A549 (cell line): ENCODE measurements at regions of chr17 and their contacts with region 1.

Region 1: DNA sequence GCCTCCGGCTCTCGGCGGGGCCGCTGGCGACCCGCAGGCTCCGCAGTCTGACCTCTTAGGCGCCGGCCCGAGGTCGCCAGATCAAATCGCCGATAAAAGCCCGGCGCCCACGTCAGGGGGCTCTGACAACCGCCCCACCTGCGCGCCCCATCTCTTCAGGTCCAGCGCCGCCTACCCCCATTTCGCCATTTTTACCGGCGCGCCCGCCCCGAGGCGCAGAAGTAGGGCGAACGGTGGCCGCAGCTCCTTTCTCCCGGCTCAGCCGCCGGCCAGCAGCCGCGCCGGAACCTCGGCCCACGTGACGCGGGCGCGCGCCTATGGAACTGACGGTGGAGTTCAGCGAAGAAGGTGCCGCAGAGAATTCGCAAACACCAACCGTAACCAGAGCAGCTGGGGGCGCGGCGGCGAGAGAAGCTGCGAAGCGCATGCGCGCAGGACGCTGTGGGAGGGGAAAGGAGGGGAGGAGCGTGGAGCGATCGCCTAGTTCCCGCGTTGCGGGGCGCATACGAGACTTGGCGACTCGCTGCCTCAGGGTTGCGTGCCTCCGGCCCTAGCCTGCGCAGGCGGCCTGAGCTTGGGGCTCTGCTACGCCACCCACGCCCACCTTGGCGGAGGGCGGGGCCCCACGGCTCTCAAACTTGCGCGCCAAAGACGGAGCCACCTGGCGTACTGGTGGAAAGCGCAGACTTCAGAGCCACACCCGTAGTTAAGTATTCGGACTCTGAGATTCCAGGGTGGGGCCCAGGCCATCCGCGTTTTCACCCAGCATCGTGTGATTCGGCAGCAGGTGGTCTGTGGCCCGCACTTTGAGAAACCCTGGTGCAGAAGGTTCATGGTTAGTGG is at the start of gene TRIM37:
- DNase-seq: peak; percentile 96 to 100
- ATAC-seq: peak; percentile 92 to 97
- H3K4me3 ChIP-seq: peak within 1 kb of the TSS; percentile 71
- H3K27ac ChIP-seq: peak within 1 kb of the TSS; percentile 85 to 90
- H3K4me1 ChIP-seq: peaks cover 19% of the 10 kb centered on the region; the same call in 2 of the 3 replicates
- CTCF ChIP-seq: no peak
- EP300 ChIP-seq: no peak
- POLR2A ChIP-seq: peak; percentile 68
- RAD21 ChIP-seq: peak in 1 of 2 experiments; percentile 6; a peak in 1 of 5 replicates
- polyA plus RNA-seq, gene TRIM37: 51.3 and 56.3 TPM in 2 replicates

Region 2: DNA sequence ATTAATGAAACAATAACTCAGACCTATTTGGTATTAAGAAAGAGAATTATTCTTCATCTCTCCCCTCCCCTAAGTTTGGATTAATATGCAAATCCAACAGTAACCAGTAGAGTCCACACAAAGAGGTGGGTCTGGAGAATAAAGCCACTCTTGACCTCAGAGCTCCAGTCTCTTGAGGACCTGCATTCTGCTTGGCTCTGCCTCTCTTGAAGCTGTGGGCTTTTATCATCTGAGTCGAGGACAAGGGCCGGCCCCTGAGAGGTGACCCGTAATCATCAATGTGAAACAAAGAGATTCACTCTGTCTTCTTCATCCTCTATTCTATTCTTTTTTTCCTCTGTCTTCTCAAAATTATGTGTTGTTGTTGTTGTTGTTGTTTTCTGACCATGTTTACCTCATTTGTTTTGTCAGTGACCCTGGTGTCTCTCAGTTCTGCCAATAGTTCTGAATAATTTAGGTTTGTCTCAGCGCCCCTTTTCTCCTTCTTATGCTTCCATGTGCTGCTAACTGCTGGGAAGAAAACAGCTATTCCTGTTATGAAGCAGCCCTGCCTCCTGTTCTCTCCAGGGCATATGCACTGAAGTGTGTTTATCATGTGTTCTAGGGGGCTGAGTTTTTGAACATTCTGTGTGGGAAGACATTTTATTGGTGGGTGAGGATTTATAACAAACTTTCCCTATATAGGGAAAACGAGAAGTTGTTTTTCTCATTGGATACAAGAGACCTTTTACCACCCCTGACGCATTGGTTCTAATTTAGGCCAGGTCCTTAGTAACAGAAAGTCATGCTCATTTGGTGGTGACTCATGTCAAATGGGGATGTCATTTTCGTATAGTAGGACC is 135.9 kb before region 1 on chr17:
- CTCF ChIA-PET with region 1: no interaction called
- POLR2A ChIA-PET with region 1: no interaction called
- DNase-seq: no peak
- ATAC-seq: no peak
- H3K4me3 ChIP-seq: no peak overlapping the region
- H3K27ac ChIP-seq: no peak overlapping the region
- H3K4me1 ChIP-seq: no peaks in the 10 kb centered on the region
- CTCF ChIP-seq: no peak
- EP300 ChIP-seq: no peak
- POLR2A ChIP-seq: no peak
- RAD21 ChIP-seq: no peak

Region 3: GRCh38 chr17:59093702-59094231 is 12.9 kb before region 1 on chr17:
- CTCF ChIA-PET with region 1: interaction called, 8 read pairs
- POLR2A ChIA-PET with region 1: interaction called, 20 read pairs
- DNase-seq: peak; percentile 34 to 90
- ATAC-seq: peak; percentile 87 to 91
- H3K4me3 ChIP-seq: peak overlapping the region; percentile 9; the same call in 1 of the 3 replicates
- H3K27ac ChIP-seq: peak overlapping the region; percentile 30 to 75; a peak in 5 of 6 replicates
- H3K4me1 ChIP-seq: peaks cover 31% of the 10 kb centered on the region
- CTCF ChIP-seq: no peak
- EP300 ChIP-seq: peak; percentile 25 to 65; a peak in 3 of 5 replicates
- POLR2A ChIP-seq: no peak
- RAD21 ChIP-seq: no peak

Region 4: DNA sequence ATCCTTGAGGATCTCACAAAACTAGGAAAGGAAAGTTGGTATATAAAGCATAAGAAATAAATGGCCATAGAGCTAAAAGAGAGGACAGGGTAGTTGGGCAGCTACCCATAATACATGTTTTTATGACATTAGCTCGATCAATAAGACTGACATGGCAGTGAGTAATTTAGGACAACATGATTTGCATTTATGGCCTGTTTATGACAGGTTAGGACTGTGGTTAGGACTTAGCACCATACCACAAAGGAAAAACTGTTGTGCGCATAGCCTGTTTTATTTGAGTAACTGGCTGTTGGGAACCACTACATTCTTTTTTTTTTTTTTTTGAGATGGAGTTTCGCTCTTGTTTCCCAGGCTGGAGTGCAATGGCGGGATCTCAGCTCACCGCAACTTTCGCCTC is 18.0 kb after region 1 on chr17:
- CTCF ChIA-PET with region 1: interaction called, 13 read pairs
- POLR2A ChIA-PET with region 1: no interaction called
- DNase-seq: no peak
- ATAC-seq: no peak
- H3K4me3 ChIP-seq: no peak overlapping the region
- H3K27ac ChIP-seq: no peak overlapping the region
- H3K4me1 ChIP-seq: no peaks in the 10 kb centered on the region
- CTCF ChIP-seq: no peak
- EP300 ChIP-seq: no peak
- POLR2A ChIP-seq: no peak
- RAD21 ChIP-seq: no peak

Region 5: GRCh38 chr17:59155439-59156182 is 48.9 kb after region 1 on chr17 and contains the start of gene PRR11:
- CTCF ChIA-PET with region 1: interaction called, 4 read pairs
- POLR2A ChIA-PET with region 1: interaction called, 27 read pairs
- DNase-seq: no peak
- ATAC-seq: peak; percentile 93 to 94
- H3K4me3 ChIP-seq: peak within 1 kb of the TSS; percentile 77
- H3K27ac ChIP-seq: peak within 1 kb of the TSS; percentile 89 to 93
- H3K4me1 ChIP-seq: peaks cover 65% of the 10 kb centered on the region
- CTCF ChIP-seq: no peak
- EP300 ChIP-seq: no peak
- POLR2A ChIP-seq: no peak
- RAD21 ChIP-seq: no peak
- polyA plus RNA-seq, gene PRR11: 54.4 and 66.4 TPM in 2 replicates

Region 6: DNA sequence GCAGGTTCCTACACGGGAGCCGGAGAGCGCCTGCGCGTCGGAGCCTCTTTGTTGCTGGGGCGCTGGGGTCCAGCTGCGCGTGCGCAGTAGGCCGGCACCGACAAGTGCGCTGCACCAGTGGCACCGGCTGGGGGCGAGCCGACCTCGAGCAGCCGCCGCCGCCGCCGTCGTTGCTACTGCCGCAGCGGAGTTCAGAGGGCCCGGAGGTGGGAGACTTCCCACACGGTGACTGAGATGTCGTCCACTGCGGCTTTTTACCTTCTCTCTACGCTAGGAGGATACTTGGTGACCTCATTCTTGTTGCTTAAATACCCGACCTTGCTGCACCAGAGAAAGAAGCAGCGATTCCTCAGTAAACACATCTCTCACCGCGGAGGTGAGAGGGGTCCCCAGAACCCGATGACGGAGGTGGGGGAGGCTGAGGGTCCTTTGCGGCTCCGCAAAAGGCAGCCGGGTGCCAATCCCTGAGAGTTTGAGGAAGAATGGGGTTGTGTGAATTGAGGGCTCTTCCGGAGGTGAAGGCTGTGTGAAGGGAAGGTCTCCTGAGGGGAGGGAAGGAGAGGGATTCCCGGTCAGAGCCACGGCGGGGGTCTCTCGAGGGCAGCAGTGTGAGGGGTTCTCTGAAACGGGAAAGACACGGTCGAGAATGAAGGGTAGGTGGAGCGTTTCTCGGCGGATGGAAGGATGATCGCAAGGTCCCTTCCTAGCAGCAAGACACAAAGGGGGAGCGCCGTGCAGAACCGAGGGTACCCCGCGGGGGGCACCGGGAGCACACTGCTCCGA is 113.9 kb after region 1 on chr17 and contains the start of gene GDPD1:
- CTCF ChIA-PET with region 1: no interaction called
- POLR2A ChIA-PET with region 1: no interaction called
- DNase-seq: peak; percentile 94 to 96
- ATAC-seq: peak; percentile 98 to 99
- H3K4me3 ChIP-seq: peak within 1 kb of the TSS; percentile 76
- H3K27ac ChIP-seq: peak within 1 kb of the TSS; percentile 77 to 85
- H3K4me1 ChIP-seq: peaks cover 17% of the 10 kb centered on the region
- CTCF ChIP-seq: peak; percentile 71
- EP300 ChIP-seq: no peak
- POLR2A ChIP-seq: peak; percentile 74
- RAD21 ChIP-seq: peak; percentile 71 to 83
- polyA plus RNA-seq, gene GDPD1: 6.4 and 6.7 TPM in 2 replicates